ENCODE measurements at regions of chr14 and their contacts with region 1.

Region 1: DNA sequence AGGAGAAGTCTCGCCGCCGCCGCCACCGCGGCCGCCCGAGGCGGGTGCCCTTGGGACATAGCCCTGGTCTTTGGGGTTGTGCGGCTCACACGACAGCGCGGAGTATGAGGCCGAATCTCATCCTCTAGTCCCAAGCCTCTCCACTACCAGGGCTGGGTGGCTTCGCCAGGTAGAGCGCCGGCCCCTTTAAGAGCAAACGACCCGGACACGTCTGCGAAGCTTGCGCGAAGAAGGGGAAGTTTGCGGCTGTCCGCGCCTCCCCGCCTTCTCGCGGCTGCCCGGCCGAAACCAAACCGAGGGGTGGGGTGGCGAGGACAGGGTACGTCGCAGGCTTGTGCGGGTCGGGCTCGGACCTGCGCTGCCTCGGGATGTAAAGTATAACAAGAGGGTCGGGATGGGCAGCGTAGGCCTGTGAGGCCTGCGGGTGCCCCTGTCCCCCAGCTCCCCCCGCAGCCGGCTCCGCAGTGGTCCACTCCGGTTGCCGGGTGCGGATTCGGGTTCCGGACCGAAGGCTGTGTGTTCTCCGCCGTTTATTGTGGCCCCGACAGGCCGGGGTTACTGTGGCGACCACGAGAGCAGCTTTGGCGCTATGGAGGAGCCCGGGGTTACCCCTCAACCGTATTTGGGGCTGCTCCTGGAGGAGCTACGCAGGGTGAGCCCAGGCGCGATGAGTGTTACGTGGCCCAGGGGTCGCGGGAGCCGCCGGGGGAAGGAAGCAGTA is 33.3 kb downstream of the MIA2 start:
- DNase-seq: peak; percentile 88
- H3K4me3 ChIP-seq: peak overlapping the region; percentile 90 to 99 (median 97)
- H3K27ac ChIP-seq: peak overlapping the region; percentile 98
- H3K4me1 ChIP-seq: peaks cover 11% of the 10 kb centered on the region
- H3K27me3 ChIP-seq: no peaks in the 10 kb centered on the region
- CTCF ChIP-seq: no peak

Region 2: GRCh38 chr14:38721822-38722431 is 545.1 kb before region 1 on chr14:
- CTCF ChIA-PET with region 1: interaction called, 18 read pairs
- dilution Hi-C with region 1: no loop called
- in situ Hi-C with region 1: no loop called
- intact Hi-C with region 1: no loop called
- DNase-seq: peak; percentile 32
- H3K4me3 ChIP-seq: no peak overlapping the region
- H3K27ac ChIP-seq: no peak overlapping the region
- H3K4me1 ChIP-seq: no peaks in the 10 kb centered on the region
- H3K27me3 ChIP-seq: no peaks in the 10 kb centered on the region
- CTCF ChIP-seq: peak; percentile 78 to 86

Region 3: DNA sequence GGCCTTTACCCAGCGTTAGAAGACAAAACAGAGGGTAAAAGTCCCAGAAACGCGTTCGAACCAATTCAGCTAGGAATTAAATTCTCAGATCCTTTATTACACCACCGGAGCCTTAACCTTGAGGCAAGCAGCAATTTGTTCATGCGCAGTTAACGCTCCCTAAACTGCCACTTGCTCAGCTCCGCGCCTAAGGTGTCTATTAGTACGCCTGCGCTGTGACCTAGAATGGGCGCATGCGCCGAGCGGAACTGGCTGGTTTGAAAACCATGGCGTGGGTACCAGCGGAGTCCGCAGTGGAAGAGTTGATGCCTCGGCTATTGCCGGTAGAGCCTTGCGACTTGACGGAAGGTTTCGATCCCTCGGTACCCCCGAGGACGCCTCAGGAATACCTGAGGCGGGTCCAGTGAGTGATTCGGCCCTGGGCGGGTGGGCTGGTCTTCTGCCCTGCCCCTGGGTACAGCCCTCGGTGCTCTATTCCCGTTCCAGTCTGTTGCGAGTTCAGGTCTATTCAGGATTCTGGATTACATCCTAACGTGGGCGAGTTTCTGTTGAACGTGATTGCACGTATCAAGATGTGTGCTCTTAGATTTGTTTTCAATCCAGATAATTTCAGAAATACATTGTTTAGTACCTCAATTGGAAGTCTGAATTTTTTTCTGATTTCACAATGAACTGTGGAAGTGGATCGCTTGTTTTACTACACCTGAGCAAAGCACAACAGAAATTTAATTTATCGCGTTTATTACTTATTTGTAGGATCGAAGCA is 152.8 kb before region 1 on chr14 and contains the start of gene GEMIN2:
- CTCF ChIA-PET with region 1: no interaction called
- dilution Hi-C with region 1: no loop called
- in situ Hi-C with region 1: no loop called
- intact Hi-C with region 1: loop called (anchors 2 kb)
- DNase-seq: peak; percentile 94
- H3K4me3 ChIP-seq: peak within 1 kb of the TSS; percentile 64 to 92 (median 79)
- H3K27ac ChIP-seq: peak within 1 kb of the TSS; percentile 78
- H3K4me1 ChIP-seq: peaks cover 5% of the 10 kb centered on the region
- H3K27me3 ChIP-seq: no peaks in the 10 kb centered on the region
- CTCF ChIP-seq: no peak
- total RNA-seq, gene GEMIN2: 15.3 to 18.2 TPM

Region 4: DNA sequence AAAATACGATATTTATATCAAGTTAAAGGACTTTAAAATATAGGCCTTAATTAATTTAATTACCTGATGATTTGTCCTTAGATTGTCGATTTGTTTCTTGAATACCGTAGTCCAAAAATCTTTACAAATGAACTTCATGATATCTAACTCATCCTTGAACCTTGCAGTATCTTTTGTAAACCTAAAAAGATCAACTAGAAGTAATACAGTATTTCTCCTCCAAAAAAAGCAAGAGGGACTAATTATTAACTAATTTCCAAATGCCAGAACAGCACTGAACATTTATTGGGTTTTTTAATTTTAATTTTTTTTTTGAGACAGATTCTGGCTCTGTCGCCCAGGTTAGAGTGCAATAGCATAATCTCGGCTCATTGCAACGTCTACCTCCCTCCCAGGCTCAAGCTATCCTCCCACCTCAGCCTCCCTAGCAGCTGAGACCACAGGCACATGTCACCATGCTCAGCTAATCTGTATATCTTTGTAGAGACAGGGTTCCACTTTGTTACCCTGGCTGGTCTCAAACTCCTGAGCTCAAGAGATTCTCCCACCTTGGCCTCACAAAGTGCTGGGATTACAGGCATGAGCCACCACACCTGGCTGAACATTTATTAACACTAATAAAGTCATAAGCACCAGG is 108.7 kb before region 1 on chr14:
- CTCF ChIA-PET with region 1: no interaction called
- dilution Hi-C with region 1: loop called (anchors 5 kb)
- in situ Hi-C with region 1: no loop called
- intact Hi-C with region 1: no loop called
- DNase-seq: no peak
- H3K4me3 ChIP-seq: no peak overlapping the region
- H3K27ac ChIP-seq: no peak overlapping the region
- H3K4me1 ChIP-seq: no peaks in the 10 kb centered on the region
- H3K27me3 ChIP-seq: no peaks in the 10 kb centered on the region
- CTCF ChIP-seq: no peak

Region 5: GRCh38 chr14:39232554-39233415 is 34.2 kb before region 1 on chr14:
- CTCF ChIA-PET with region 1: no interaction called
- dilution Hi-C with region 1: no loop called
- in situ Hi-C with region 1: no loop called
- intact Hi-C with region 1: loop called (anchors 1 kb)
- DNase-seq: peak; percentile 43
- H3K4me3 ChIP-seq: no peak overlapping the region
- H3K27ac ChIP-seq: peak overlapping the region; percentile 15
- H3K4me1 ChIP-seq: peaks cover 9% of the 10 kb centered on the region
- H3K27me3 ChIP-seq: peaks cover 1% of the 10 kb centered on the region
- CTCF ChIP-seq: peak in 1 of 2 donors; percentile 8

Region 6: GRCh38 chr14:39492267-39492666 is 225.2 kb after region 1 on chr14:
- CTCF ChIA-PET with region 1: no interaction called
- dilution Hi-C with region 1: no loop called
- in situ Hi-C with region 1: no loop called
- intact Hi-C with region 1: no loop called
- DNase-seq: peak; percentile 48
- H3K4me3 ChIP-seq: no peak overlapping the region
- H3K27ac ChIP-seq: no peak overlapping the region
- H3K4me1 ChIP-seq: no peaks in the 10 kb centered on the region
- H3K27me3 ChIP-seq: no peaks in the 10 kb centered on the region
- CTCF ChIP-seq: no peak

Measured in mammary epithelial cell (primary cell).